ENCODE measurements at regions of chr20 and their contacts with region 1.

Region 1: DNA sequence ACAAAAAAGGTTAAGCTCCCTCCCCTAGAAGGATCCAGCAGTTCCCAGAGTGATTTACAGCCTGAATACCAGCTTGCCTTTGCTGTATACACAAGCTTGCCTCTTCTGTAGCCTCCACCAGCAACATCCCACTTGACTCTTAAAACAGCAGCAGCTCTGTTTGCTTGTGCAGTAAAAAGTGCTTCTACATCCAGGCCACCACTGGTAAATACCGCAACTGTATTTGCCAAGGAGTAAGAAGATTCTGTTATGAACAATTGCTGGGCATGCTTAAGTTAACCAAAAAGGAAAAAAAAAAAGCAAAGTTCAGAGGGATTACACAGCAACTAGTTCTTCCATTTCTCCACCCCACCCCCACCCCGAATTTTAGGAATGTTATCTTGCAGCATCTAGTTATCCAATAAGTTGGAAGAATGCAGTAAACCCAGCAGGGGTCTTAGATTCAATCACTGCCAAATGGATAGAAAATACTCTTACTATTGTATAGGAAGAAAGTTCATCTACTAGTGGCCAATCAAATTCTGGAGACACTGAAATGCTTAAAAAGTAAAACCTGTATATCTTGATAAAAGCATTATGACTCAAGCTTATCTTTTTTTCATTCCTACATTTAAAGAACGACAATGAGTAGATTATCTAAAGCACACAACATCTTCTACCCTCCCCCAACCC is 4.8 kb downstream of the SALL4 start:
- DNase-seq: no peak
- H3K4me3 ChIP-seq: no peak overlapping the region
- H3K27ac ChIP-seq: no peak overlapping the region
- H3K4me1 ChIP-seq: peaks cover 14 to 26% (median 22%) of the 10 kb centered on the region in 4 donors
- H3K27me3 ChIP-seq: peaks cover 46% of the 10 kb centered on the region
- CTCF ChIP-seq: no peak
- EP300 ChIP-seq: no peak
- POLR2A ChIP-seq: no peak

Region 2: DNA sequence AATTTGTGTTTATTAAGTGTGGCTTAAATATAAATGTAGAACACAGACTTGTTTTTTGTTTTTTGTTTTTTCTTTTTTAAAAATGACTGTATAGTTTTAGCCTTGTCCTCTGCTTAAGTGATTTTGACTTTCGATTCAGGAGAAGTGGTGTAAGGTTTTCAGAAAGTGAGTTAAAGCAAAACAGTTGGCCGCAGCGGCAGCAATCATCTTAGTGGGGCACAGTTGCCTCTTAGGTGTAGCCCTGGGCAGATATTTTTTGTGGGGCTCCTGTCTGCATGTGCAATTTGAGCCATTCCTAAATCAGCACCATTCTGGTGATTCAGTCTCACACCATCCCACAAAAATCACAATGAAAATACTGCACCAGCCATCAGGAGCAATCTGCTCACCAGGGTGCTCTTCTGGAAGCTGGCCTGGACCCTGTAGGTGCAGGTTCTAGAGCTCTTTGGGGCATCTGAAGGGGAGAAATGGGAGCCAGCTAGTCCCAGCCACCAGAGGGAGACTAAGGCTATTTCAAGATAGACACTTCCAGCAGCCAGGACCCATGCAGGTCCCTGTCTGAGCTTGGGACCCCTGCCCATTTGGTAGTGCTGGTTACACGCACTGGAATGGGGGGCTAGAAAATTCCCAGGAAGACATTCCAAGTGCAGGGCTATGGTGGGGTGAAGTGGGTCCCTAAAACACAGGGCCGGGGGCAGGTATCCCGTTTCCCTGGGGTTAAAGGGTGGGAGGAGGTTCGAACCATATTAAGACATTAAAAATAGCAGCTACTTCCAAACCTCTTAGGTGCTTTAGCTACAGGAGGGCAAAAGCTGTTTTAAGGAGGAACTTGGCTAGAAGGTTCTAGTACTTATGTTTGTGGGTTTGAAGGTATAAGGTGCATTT is 411.6 kb before region 1 on chr20:
- in situ Hi-C with region 1: no loop called
- intact Hi-C with region 1: no loop called
- DNase-seq: peak; percentile 28
- H3K4me3 ChIP-seq: no peak overlapping the region
- H3K27ac ChIP-seq: no peak overlapping the region
- H3K4me1 ChIP-seq: peaks cover 0 to 12% (median 6%) of the 10 kb centered on the region in 4 donors
- H3K27me3 ChIP-seq: no peaks in the 10 kb centered on the region
- CTCF ChIP-seq: peak; percentile 19 to 38 (median 33)
- EP300 ChIP-seq: no peak
- POLR2A ChIP-seq: no peak

Region 3: GRCh38 chr20:51639206-51639832 is 158.2 kb before region 1 on chr20:
- in situ Hi-C with region 1: loop called in 1 of 4 experiments (anchors 25 kb)
- intact Hi-C with region 1: no loop called
- DNase-seq: peak; percentile 66
- H3K4me3 ChIP-seq: no peak overlapping the region
- H3K27ac ChIP-seq: no peak overlapping the region
- H3K4me1 ChIP-seq: no peaks in the 10 kb centered on the region
- H3K27me3 ChIP-seq: no peaks in the 10 kb centered on the region
- CTCF ChIP-seq: peak; percentile 65 to 81 (median 78)
- EP300 ChIP-seq: no peak
- POLR2A ChIP-seq: no peak

Region 4: DNA sequence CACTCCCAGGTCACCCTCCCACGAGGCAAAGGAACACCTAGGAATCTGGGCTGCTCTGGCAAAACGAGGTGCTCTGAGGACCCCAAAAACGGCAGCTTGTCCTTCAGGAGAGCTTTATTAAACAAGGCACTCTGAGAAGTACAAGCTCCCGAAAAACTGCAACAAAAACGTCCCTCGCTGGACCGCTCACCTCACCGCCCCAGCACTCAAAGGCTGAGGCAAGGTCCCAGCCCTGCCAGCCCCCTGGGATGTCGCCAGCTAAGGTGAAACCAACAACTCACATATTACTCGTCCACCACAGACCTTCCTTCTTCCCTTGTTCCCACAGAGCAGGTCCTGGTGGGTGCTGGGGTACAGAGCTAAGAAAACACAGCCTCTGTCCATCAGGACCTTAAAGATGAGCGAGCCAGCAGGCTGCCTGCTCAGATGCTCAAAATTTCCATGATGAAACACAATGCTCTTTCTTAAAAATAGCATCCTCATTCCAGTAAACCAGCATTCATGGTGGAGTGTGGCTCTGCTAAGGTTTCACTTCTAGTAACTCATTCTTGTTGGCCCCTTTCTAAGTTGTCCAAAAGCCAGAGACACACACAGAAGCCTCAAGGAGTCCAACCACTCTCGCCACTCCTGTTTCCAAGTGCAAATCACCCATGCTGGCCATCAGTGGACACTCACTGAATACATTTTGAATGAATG is 65.2 kb before region 1 on chr20:
- in situ Hi-C with region 1: no loop called
- intact Hi-C with region 1: no loop called
- DNase-seq: no peak
- H3K4me3 ChIP-seq: no peak overlapping the region
- H3K27ac ChIP-seq: peak overlapping the region; percentile 52 to 71 (median 68)
- H3K4me1 ChIP-seq: peaks cover 11 to 48% (median 25%) of the 10 kb centered on the region in 4 donors
- H3K27me3 ChIP-seq: no peaks in the 10 kb centered on the region
- CTCF ChIP-seq: no peak
- EP300 ChIP-seq: peak; percentile 27
- POLR2A ChIP-seq: no peak

Region 5: GRCh38 chr20:51823813-51824212 is 26.3 kb after region 1 on chr20:
- in situ Hi-C with region 1: no loop called
- intact Hi-C with region 1: no loop called
- DNase-seq: no peak
- H3K4me3 ChIP-seq: no peak overlapping the region
- H3K27ac ChIP-seq: no peak overlapping the region
- H3K4me1 ChIP-seq: no peaks in the 10 kb centered on the region
- H3K27me3 ChIP-seq: no peaks in the 10 kb centered on the region
- CTCF ChIP-seq: no peak
- EP300 ChIP-seq: no peak
- POLR2A ChIP-seq: no peak

Region 6: GRCh38 chr20:52349806-52350205 is 552.3 kb after region 1 on chr20:
- in situ Hi-C with region 1: no loop called
- intact Hi-C with region 1: no loop called
- DNase-seq: no peak
- H3K4me3 ChIP-seq: no peak overlapping the region
- H3K27ac ChIP-seq: no peak overlapping the region
- H3K4me1 ChIP-seq: no peaks in the 10 kb centered on the region
- H3K27me3 ChIP-seq: no peaks in the 10 kb centered on the region
- CTCF ChIP-seq: no peak
- EP300 ChIP-seq: no peak
- POLR2A ChIP-seq: no peak

Measured in transverse colon (tissue), 4 donors.